ENCODE measurements at regions of chr2 and their contacts with region 1.

Region 1: GRCh38 chr2:135004005-135004746 is 43.1 kb downstream of the MAP3K19 start:
- DNase-seq: peak; percentile 33 to 81 (median 64)
- ATAC-seq: peak; percentile 83
- H3K4me3 ChIP-seq: no peak overlapping the region
- H3K4me3 Mint-ChIP-seq: no peak overlapping the region
- H3K27ac ChIP-seq: no peak overlapping the region
- H3K27ac Mint-ChIP-seq: no peak overlapping the region
- H3K4me1 ChIP-seq: peaks cover 6% of the 10 kb centered on the region
- H3K4me1 Mint-ChIP-seq: peaks cover 5% of the 10 kb centered on the region
- H3K27me3 ChIP-seq: peaks cover 0 to 6% of the 10 kb centered on the region in 2 experiments
- H3K27me3 Mint-ChIP-seq: peaks cover 20% of the 10 kb centered on the region
- CTCF ChIP-seq: peak; percentile 98

Region 2: GRCh38 chr2:135052042-135052876 is 48.1 kb after region 1 on chr2 and contains the start of gene RAB3GAP1:
- CTCF ChIA-PET with region 1: interaction called, 3 read pairs
- POLR2A ChIA-PET with region 1: no interaction called
- intact Hi-C with region 1: loop called in 1 of 2 experiments (anchors 1 kb)
- DNase-seq: peak; percentile 79 to 98 (median 89)
- ATAC-seq: peak; percentile 82
- H3K4me3 ChIP-seq: peak within 1 kb of the TSS; percentile 66
- H3K4me3 Mint-ChIP-seq: peak within 1 kb of the TSS; percentile 97
- H3K27ac ChIP-seq: peak within 1 kb of the TSS; percentile 96
- H3K27ac Mint-ChIP-seq: peak within 1 kb of the TSS; percentile 99
- H3K4me1 ChIP-seq: peaks cover 18% of the 10 kb centered on the region
- H3K4me1 Mint-ChIP-seq: peaks cover 38% of the 10 kb centered on the region
- H3K27me3 ChIP-seq: no peaks in the 10 kb centered on the region
- H3K27me3 Mint-ChIP-seq: no peaks in the 10 kb centered on the region
- CTCF ChIP-seq: no peak
- total RNA-seq, gene RAB3GAP1: 35.9 to 37.0 TPM

Region 3: DNA sequence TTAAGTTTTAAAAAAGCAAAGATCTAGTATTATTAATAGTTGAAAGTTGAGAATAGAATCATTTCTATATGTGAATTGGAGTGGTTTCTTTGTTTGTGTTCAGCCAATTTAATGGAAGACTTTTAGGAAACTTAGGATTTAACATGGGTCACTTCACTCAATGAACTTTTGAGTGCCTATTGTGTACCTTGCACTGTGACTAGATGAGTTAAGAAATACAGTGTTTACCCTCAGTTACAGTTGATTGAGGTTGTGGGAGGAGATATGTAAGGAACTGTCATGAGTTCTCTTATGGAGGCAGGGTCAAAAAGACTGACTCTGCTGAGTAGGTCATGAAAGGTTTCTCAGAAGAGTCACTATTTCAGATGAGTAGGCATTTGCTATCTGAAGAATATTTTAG is 146.5 kb after region 1 on chr2:
- CTCF ChIA-PET with region 1: interaction called, 6 read pairs
- POLR2A ChIA-PET with region 1: no interaction called
- intact Hi-C with region 1: loop called in 1 of 2 experiments (anchors 10 kb)
- DNase-seq: no peak
- ATAC-seq: no peak
- H3K4me3 ChIP-seq: no peak overlapping the region
- H3K4me3 Mint-ChIP-seq: no peak overlapping the region
- H3K27ac ChIP-seq: no peak overlapping the region
- H3K27ac Mint-ChIP-seq: no peak overlapping the region
- H3K4me1 ChIP-seq: no peaks in the 10 kb centered on the region
- H3K4me1 Mint-ChIP-seq: peaks cover 12% of the 10 kb centered on the region
- H3K27me3 ChIP-seq: no peaks in the 10 kb centered on the region
- H3K27me3 Mint-ChIP-seq: no peaks in the 10 kb centered on the region
- CTCF ChIP-seq: no peak

Region 4: GRCh38 chr2:135164441-135164840 is 160.3 kb after region 1 on chr2:
- CTCF ChIA-PET with region 1: interaction called, 5 read pairs
- POLR2A ChIA-PET with region 1: no interaction called
- intact Hi-C with region 1: loop called (anchors 5 to 10 kb)
- DNase-seq: no peak
- ATAC-seq: no peak
- H3K4me3 ChIP-seq: no peak overlapping the region
- H3K4me3 Mint-ChIP-seq: no peak overlapping the region
- H3K27ac ChIP-seq: no peak overlapping the region
- H3K27ac Mint-ChIP-seq: no peak overlapping the region
- H3K4me1 ChIP-seq: no peaks in the 10 kb centered on the region
- H3K4me1 Mint-ChIP-seq: no peaks in the 10 kb centered on the region
- H3K27me3 ChIP-seq: no peaks in the 10 kb centered on the region
- H3K27me3 Mint-ChIP-seq: no peaks in the 10 kb centered on the region
- CTCF ChIP-seq: no peak

Region 5: GRCh38 chr2:135473567-135473966 is 469.4 kb after region 1 on chr2:
- CTCF ChIA-PET with region 1: no interaction called
- POLR2A ChIA-PET with region 1: no interaction called
- intact Hi-C with region 1: loop called (anchors 5 kb)
- DNase-seq: peak in 11 of 14 experiments; percentile 1 to 56 (median 12)
- ATAC-seq: no peak
- H3K4me3 ChIP-seq: no peak overlapping the region
- H3K4me3 Mint-ChIP-seq: no peak overlapping the region
- H3K27ac ChIP-seq: no peak overlapping the region
- H3K27ac Mint-ChIP-seq: no peak overlapping the region
- H3K4me1 ChIP-seq: no peaks in the 10 kb centered on the region
- H3K4me1 Mint-ChIP-seq: no peaks in the 10 kb centered on the region
- H3K27me3 ChIP-seq: no peaks in the 10 kb centered on the region
- H3K27me3 Mint-ChIP-seq: no peaks in the 10 kb centered on the region
- CTCF ChIP-seq: peak; percentile 51

Region 6: DNA sequence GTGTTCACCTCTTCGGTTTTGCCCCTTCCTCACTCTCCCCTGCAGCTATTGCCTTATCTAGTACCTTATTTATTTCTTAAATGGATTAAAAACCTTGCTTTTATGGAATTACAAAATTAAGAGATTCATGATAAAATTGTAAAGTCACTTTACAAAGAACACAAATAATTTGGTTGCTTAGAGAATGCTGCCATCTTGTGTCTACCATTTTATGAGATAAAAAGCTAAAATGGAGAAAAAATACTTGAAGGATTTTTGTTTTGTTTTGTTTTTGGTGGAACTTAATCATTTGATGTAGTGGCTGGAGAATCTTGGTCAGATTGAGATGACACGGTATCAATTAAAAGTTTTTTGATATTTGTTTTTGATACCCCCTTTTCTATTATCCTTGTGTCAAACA is 596.7 kb after region 1 on chr2:
- CTCF ChIA-PET with region 1: interaction called, 3 read pairs
- POLR2A ChIA-PET with region 1: interaction called, 5 read pairs
- intact Hi-C with region 1: loop called (anchors 1 to 2 kb)
- DNase-seq: peak in 3 of 14 experiments; percentile 18 to 29 (median 26)
- ATAC-seq: no peak
- H3K4me3 ChIP-seq: no peak overlapping the region
- H3K4me3 Mint-ChIP-seq: no peak overlapping the region
- H3K27ac ChIP-seq: no peak overlapping the region
- H3K27ac Mint-ChIP-seq: no peak overlapping the region
- H3K4me1 ChIP-seq: no peaks in the 10 kb centered on the region
- H3K4me1 Mint-ChIP-seq: peaks cover 13% of the 10 kb centered on the region
- H3K27me3 ChIP-seq: no peaks in the 10 kb centered on the region
- H3K27me3 Mint-ChIP-seq: no peaks in the 10 kb centered on the region
- CTCF ChIP-seq: peak; percentile 35

Region 7: GRCh38 chr2:135709992-135710391 is 705.8 kb after region 1 on chr2:
- CTCF ChIA-PET with region 1: interaction called, 38 read pairs
- POLR2A ChIA-PET with region 1: interaction called, 4 read pairs
- intact Hi-C with region 1: loop called (anchors 1 kb)
- DNase-seq: peak; percentile 46 to 82 (median 68)
- ATAC-seq: peak; percentile 87
- H3K4me3 ChIP-seq: no peak overlapping the region
- H3K4me3 Mint-ChIP-seq: no peak overlapping the region
- H3K27ac ChIP-seq: no peak overlapping the region
- H3K27ac Mint-ChIP-seq: no peak overlapping the region
- H3K4me1 ChIP-seq: no peaks in the 10 kb centered on the region
- H3K4me1 Mint-ChIP-seq: no peaks in the 10 kb centered on the region
- H3K27me3 ChIP-seq: no peaks in the 10 kb centered on the region
- H3K27me3 Mint-ChIP-seq: no peaks in the 10 kb centered on the region
- CTCF ChIP-seq: peak; percentile 99